ENCODE measurements at regions of chr12 and their contacts with region 1.

Region 1: GRCh38 chr12:64796208-64796845 is 28.1 kb upstream of the TBC1D30 start:
- DNase-seq: peak; percentile 66
- H3K4me3 ChIP-seq: no peak overlapping the region
- H3K27ac ChIP-seq: no peak overlapping the region
- H3K27me3 ChIP-seq: peaks cover 22% of the 10 kb centered on the region
- CTCF ChIP-seq: peak; percentile 83

Region 2: DNA sequence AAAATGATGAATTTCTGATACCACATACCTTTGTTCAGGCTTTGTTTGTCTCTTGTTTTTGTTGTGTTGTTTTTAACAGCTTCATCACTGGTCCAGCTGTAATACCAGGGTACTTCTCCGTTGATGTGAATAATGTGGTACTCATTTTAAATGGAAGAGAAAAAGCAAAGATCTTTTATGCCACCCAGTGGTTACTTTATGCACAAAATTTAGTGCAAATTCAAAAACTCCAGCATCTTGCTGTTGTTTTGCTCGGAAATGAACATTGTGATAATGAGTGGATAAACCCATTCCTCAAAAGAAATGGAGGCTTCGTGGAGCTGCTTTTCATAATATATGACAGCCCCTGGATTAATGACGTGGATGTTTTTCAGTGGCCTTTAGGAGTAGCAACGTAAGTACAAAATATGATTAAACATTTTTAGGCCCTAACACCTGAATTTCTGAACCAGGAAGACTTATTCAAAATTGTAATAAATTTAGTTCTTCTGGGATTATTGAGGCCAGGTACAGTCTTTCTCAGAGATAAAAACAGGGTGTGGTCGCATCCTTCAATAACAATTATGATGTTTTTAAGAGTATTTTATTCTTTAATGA is 994.2 kb before region 1 on chr12:
- CTCF ChIA-PET with region 1: interaction called, 10 read pairs
- POLR2A ChIA-PET with region 1: no interaction called
- DNase-seq: no peak
- H3K4me3 ChIP-seq: no peak overlapping the region
- H3K27ac ChIP-seq: no peak overlapping the region
- H3K27me3 ChIP-seq: no peaks in the 10 kb centered on the region
- CTCF ChIP-seq: peak; percentile 71

Region 3: DNA sequence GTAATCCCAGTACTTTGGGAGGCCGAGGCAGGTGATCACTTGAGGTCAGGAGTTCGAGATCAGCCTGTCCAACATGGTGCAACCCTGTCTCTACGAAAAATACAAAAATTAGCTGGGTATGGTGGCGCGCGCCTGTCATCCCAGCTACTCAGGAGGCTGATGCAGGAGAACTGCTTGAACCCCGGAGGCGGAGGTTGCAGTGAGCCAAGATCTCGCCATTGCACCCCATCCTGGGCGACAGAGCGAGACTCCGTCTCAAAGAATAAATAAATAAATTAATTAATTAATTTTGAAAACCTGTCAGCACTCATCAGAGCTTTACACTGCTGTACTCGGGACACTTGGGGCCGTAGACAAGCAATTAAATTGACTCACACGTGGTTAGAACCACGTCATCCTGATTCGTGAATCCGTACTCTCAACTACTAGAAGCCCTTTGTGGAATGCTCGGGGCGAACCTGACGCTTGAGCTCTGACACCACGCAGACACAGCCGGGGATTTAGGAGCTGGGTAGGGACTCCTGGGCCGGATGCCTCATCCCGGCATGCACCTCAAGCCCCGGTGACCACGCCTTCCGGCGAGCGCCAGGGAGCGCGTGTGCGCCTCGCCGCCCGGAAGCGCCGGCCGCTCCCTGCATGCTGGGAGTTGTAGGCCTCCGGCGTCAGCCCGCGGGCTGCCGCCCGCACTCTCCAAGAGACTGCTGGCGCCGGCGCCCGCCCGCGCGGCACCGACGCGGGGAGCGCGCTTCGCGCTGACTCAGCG is 392.4 kb before region 1 on chr12 and contains the start of gene XPOT:
- CTCF ChIA-PET with region 1: no interaction called
- POLR2A ChIA-PET with region 1: no interaction called
- DNase-seq: peak; percentile 95
- H3K4me3 ChIP-seq: peak within 1 kb of the TSS; percentile 97
- H3K27ac ChIP-seq: peak within 1 kb of the TSS; percentile 100
- H3K27me3 ChIP-seq: no peaks in the 10 kb centered on the region
- CTCF ChIP-seq: no peak
- polyA plus RNA-seq, gene XPOT: 127 and 183 TPM in 2 replicates

Region 4: GRCh38 chr12:64785838-64786237 is 10.5 kb before region 1 on chr12:
- CTCF ChIA-PET with region 1: interaction called, 37 read pairs
- POLR2A ChIA-PET with region 1: interaction called, 5 read pairs
- DNase-seq: no peak
- H3K4me3 ChIP-seq: no peak overlapping the region
- H3K27ac ChIP-seq: no peak overlapping the region
- H3K27me3 ChIP-seq: peaks cover 28% of the 10 kb centered on the region
- CTCF ChIP-seq: no peak

Region 5: GRCh38 chr12:64814432-64814831 is 18.1 kb after region 1 on chr12:
- CTCF ChIA-PET with region 1: interaction called, 34 read pairs
- POLR2A ChIA-PET with region 1: no interaction called
- DNase-seq: no peak
- H3K4me3 ChIP-seq: no peak overlapping the region
- H3K27ac ChIP-seq: no peak overlapping the region
- H3K27me3 ChIP-seq: peaks cover 11% of the 10 kb centered on the region
- CTCF ChIP-seq: no peak

Region 6: GRCh38 chr12:64923536-64923935 is 127.2 kb after region 1 on chr12:
- CTCF ChIA-PET with region 1: interaction called, 12 read pairs
- POLR2A ChIA-PET with region 1: no interaction called
- DNase-seq: no peak
- H3K4me3 ChIP-seq: no peak overlapping the region
- H3K27ac ChIP-seq: no peak overlapping the region
- H3K27me3 ChIP-seq: peaks cover 22% of the 10 kb centered on the region
- CTCF ChIP-seq: no peak